Endothelial cell of umbilical vein (primary cell): ENCODE measurements at regions of chr15 and their contacts with region 1.

Region 1: DNA sequence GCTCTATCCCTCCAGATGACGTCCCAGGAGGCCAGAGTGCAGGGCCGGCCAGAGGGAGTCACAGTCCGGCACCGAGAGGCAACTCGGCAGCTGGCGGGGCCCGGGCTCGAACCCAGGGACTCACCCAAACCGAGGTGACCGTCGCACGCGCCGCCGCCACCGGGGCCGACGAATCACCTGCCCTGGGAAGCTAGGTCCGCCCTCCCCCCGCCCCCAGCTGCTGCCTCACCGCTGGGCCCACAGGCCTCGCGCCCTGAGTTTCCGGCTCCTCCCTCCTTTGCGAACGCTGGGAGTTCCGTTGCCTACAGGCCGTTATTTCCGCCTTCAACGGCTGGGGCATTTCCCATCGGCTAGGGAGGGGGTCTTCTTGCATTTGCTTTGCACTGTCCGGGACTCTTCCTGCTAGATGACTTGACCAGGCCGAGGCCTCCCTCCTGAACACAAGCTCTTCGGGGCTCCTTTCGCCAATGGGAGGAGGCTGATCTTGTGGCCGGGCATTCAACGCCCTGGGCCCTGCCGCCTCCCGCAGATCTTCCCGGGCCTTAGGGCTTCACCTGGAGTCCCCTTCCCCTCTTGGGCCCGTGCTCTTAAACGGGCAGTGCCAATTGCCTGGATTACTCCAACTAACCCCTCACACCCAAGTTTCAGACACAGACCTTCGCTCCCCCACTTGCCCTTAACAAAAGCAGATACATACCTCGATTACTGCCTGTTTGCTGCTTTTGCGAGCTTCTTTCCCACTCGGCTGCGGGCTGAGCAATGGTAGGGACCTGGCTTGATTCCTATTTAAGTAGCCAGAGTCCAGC is at the start of gene SNUPN:
- DNase-seq: peak; percentile 89
- H3K4me3 ChIP-seq: peak within 1 kb of the TSS; percentile 53 to 78 (median 59)
- H3K27ac ChIP-seq: peak within 1 kb of the TSS; percentile 67
- H3K4me1 ChIP-seq: peaks cover 14% of the 10 kb centered on the region
- H3K27me3 ChIP-seq: no peaks in the 10 kb centered on the region
- CTCF ChIP-seq: no peak
- POLR2A ChIP-seq: peak; percentile 86
- total RNA-seq, gene SNUPN: 19.3 and 25.1 TPM in 2 replicates

Region 2: DNA sequence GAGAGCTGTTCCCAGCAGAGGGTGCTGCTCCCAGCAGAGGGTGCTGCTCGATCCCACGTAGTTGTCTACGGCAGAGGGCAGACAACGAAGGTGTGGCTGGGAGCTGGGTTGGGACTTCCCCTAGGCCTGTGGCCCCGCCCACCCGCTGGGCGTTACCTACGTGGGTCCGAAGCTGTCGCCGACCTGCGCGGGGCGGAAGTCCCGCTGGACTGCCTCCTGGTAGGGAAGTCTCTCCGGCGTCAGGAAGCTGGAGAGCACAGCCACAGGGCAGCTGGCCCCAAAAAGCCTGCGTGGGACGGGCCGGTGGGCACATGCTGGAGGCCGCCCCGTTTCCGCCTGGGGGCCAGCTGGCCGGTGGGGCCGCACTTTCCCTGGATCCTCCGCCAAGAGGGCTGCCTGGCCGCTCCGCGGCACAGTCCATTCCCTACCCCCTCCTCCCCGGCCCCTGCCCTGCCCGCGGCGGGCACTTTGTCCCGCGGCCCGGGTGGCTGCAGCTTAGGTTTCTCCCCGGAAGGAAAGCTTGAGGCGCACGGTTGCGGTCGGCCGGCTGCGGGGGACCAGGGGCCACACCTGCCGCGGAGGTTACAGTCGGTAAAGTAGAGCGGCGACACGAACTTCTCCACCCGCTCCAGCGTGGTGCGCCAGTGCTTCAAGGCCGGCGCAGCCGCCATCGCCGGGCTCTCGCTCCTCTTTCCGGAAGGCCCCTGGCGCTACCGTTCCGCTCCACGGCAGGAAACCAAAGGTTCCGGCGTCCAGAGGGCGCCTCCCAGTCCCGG is 257.6 kb before region 1 on chr15 and contains the start of gene MAN2C1:
- CTCF ChIA-PET with region 1: interaction called, 8 read pairs
- POLR2A ChIA-PET with region 1: no interaction called
- dilution Hi-C with region 1: no loop called
- intact Hi-C with region 1: loop called (anchors 1 kb)
- DNase-seq: peak; percentile 93
- H3K4me3 ChIP-seq: peak within 1 kb of the TSS; percentile 50 to 83 (median 51)
- H3K27ac ChIP-seq: peak within 1 kb of the TSS; percentile 79
- H3K4me1 ChIP-seq: peaks cover 15% of the 10 kb centered on the region
- H3K27me3 ChIP-seq: no peaks in the 10 kb centered on the region
- CTCF ChIP-seq: peak; percentile 63 to 76
- POLR2A ChIP-seq: peak; percentile 93
- total RNA-seq, gene MAN2C1: 248 TPM in 2 replicates

Region 3: GRCh38 chr15:75508840-75509532 is 116.8 kb before region 1 on chr15:
- CTCF ChIA-PET with region 1: interaction called, 17 read pairs
- POLR2A ChIA-PET with region 1: no interaction called
- dilution Hi-C with region 1: no loop called
- intact Hi-C with region 1: no loop called
- DNase-seq: peak; percentile 58
- H3K4me3 ChIP-seq: no peak overlapping the region
- H3K27ac ChIP-seq: no peak overlapping the region
- H3K4me1 ChIP-seq: no peaks in the 10 kb centered on the region
- H3K27me3 ChIP-seq: no peaks in the 10 kb centered on the region
- CTCF ChIP-seq: peak; percentile 30 to 61
- POLR2A ChIP-seq: no peak

Region 4: DNA sequence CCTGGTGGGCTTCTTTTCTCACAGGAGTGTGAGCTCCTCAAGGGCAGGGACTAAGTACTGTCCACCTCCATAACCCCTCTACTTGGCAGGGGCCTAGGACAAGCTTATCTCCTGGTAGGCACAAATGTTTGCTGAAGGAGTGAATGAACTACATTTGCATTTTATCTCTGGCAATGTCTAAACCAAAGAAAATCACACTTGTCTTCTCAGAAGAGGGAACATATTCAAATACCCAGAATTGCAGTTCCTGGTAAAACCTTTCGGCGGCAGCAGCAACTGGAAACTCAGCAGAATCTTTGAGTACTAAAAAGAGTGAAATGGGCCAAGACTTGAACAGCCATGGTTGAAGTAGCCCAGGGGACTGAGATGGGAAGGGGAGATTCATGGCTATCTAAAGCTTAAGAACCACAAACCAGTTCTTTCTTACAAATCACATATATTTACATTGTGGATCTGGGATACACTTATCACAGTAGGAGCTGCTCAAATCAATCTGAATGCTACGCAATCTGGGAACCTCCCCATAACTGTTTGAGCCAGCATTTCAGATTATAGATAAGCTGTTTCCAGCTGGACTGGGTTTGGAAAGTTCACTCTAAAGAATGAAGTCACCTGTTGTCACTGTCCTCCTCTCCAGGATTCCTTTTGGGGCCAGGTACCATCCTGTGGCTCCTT is 27.9 kb before region 1 on chr15:
- CTCF ChIA-PET with region 1: interaction called, 11 read pairs
- POLR2A ChIA-PET with region 1: no interaction called
- dilution Hi-C with region 1: no loop called
- intact Hi-C with region 1: no loop called
- DNase-seq: peak; percentile 36
- H3K4me3 ChIP-seq: no peak overlapping the region
- H3K27ac ChIP-seq: no peak overlapping the region
- H3K4me1 ChIP-seq: peaks cover 9% of the 10 kb centered on the region
- H3K27me3 ChIP-seq: no peaks in the 10 kb centered on the region
- CTCF ChIP-seq: peak; percentile 15 to 30
- POLR2A ChIP-seq: no peak

Region 5: DNA sequence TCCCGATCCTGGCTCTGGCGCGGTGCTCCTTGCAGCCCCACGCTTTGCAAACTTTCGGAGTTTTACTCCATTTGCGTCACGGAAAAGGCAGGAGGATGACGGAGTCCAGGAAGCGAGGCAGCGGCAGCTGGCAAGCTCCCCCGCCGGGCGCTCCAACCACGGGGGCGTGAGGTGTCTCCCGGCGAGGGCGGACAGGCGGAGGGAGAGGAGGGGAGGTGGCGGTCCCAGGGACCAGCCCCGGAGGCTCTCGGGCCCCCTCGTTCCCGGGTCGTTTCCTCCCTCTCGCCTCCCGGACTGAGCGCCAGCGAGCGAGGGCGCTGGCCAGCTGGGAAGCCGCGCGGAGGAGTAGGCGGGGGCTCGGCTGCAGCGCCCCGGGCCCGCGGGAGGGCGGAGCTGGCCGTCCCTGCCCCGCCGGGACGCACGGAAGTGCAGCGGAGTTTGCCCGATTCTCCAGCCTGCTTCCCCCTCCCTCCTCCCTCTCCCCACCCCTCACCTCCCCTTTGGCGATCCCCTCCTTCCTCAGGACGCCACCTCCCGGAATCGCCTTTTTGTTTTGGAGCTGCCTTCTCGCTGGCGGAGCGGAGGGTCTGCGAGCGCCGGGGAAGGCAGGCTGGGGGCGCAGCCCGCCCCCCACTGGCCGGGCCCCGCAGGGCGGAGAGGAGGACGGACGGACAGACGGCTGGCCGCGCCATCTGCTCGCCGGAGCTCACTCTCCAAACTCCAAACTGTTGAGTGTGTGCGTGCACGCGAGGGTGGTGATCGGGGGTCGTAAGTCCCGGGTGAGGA is 21.8 kb after region 1 on chr15 and contains the start of gene SNX33:
- CTCF ChIA-PET with region 1: interaction called, 17 read pairs
- POLR2A ChIA-PET with region 1: no interaction called
- dilution Hi-C with region 1: no loop called
- intact Hi-C with region 1: no loop called
- DNase-seq: peak; percentile 76
- H3K4me3 ChIP-seq: peak within 1 kb of the TSS; percentile 53 to 72 (median 64)
- H3K27ac ChIP-seq: peak within 1 kb of the TSS; percentile 37
- H3K4me1 ChIP-seq: peaks cover 29% of the 10 kb centered on the region
- H3K27me3 ChIP-seq: no peaks in the 10 kb centered on the region
- CTCF ChIP-seq: peak; percentile 67 to 74
- POLR2A ChIP-seq: no peak
- total RNA-seq, gene SNX33: 10.6 and 12.6 TPM in 2 replicates

Region 6: DNA sequence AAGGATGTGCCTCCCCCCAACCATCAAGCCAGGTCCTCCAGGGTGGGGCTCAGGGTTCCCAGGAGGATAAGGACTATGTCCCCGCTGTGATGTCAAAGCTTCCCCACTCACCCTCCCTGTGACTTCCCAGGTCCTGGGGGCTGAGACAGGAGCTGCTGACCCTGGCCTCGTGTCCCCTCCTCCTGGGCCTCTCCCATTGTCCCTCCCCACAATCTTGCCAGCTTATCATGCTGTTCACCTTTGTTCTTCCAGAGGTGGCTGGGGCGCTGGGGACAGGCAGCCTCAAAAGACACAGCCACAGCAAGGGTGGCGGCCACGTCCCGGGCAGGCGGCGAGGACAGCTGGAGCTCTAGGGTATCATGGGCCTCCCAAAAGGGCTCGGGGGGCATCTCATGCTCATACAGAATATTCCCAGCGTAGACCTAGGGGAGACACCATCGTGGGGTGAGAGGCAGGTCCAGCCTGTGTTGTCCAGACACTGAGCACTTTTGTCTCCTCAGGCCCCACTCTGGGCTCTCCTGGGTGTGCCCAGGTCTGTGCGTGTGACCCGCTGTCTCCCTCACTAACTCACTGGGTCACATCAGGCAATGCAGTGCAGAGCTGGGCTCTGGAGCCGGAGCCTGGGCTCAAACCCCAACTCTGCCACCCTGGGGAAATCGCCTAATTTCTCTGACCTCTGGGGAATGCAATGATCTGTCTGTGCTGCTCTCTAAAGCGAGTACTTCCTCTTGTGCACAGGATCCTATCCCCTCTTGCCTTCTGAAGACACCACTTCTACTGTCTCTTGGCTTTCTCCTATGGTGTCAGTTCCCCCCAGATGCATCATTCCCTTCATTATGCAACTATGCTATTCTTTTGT is 51.9 kb after region 1 on chr15:
- CTCF ChIA-PET with region 1: interaction called, 15 read pairs
- POLR2A ChIA-PET with region 1: no interaction called
- dilution Hi-C with region 1: no loop called
- intact Hi-C with region 1: no loop called
- DNase-seq: no peak
- H3K4me3 ChIP-seq: no peak overlapping the region
- H3K27ac ChIP-seq: no peak overlapping the region
- H3K4me1 ChIP-seq: no peaks in the 10 kb centered on the region
- H3K27me3 ChIP-seq: peaks cover 0 to 5% of the 10 kb centered on the region in 2 experiments
- CTCF ChIP-seq: no peak
- POLR2A ChIP-seq: no peak

Region 7: GRCh38 chr15:75696854-75697259 is 71.1 kb after region 1 on chr15:
- CTCF ChIA-PET with region 1: no interaction called
- POLR2A ChIA-PET with region 1: no interaction called
- dilution Hi-C with region 1: no loop called
- intact Hi-C with region 1: no loop called
- DNase-seq: no peak
- H3K4me3 ChIP-seq: no peak overlapping the region
- H3K27ac ChIP-seq: no peak overlapping the region
- H3K4me1 ChIP-seq: peaks cover 16% of the 10 kb centered on the region
- H3K27me3 ChIP-seq: peaks cover 31 to 44% of the 10 kb centered on the region in 2 experiments
- CTCF ChIP-seq: no peak
- POLR2A ChIP-seq: no peak

Region 8: GRCh38 chr15:75738647-75739331 is 113.0 kb after region 1 on chr15:
- CTCF ChIA-PET with region 1: no interaction called
- POLR2A ChIA-PET with region 1: no interaction called
- dilution Hi-C with region 1: no loop called
- intact Hi-C with region 1: no loop called
- DNase-seq: peak; percentile 80
- H3K4me3 ChIP-seq: peak overlapping the region in 2 of 3 experiments; percentile 13 to 41
- H3K27ac ChIP-seq: no peak overlapping the region
- H3K4me1 ChIP-seq: peaks cover 8% of the 10 kb centered on the region
- H3K27me3 ChIP-seq: peaks cover 13 to 16% of the 10 kb centered on the region in 2 experiments
- CTCF ChIP-seq: no peak
- POLR2A ChIP-seq: no peak